H1 (cell line): ENCODE measurements at regions of chr6 and their contacts with region 1.

Region 1: GRCh38 chr6:39865011-39865888 is 69.0 kb downstream of the MOCS1 start:
- DNase-seq: peak; percentile 13 to 95
- H3K4me3 ChIP-seq: no peak overlapping the region
- H3K27ac ChIP-seq: no peak overlapping the region
- H3K4me1 ChIP-seq: peaks cover 0 to 6% (median 3%) of the 10 kb centered on the region in 4 experiments; a peak in 3 of 7 replicates
- H3K27me3 ChIP-seq: no peaks in the 10 kb centered on the region
- CTCF ChIP-seq: peak; percentile 82 to 90 (median 88)
- EP300 ChIP-seq: no peak
- POLR2A ChIP-seq: no peak
- RAD21 ChIP-seq: peak; percentile 66 to 76

Region 2: GRCh38 chr6:39361657-39362486 is 503.4 kb before region 1 on chr6:
- CTCF ChIA-PET with region 1: interaction called, 17 read pairs
- POLR2A ChIA-PET with region 1: no interaction called
- DNase-seq: peak; percentile 49 to 88
- H3K4me3 ChIP-seq: no peak overlapping the region
- H3K27ac ChIP-seq: no peak overlapping the region
- H3K4me1 ChIP-seq: peaks cover 0 to 7% (median 2%) of the 10 kb centered on the region in 4 experiments; a peak in 4 of 7 replicates
- H3K27me3 ChIP-seq: no peaks in the 10 kb centered on the region
- CTCF ChIP-seq: peak; percentile 84 to 96 (median 89)
- EP300 ChIP-seq: no peak
- POLR2A ChIP-seq: no peak
- RAD21 ChIP-seq: peak; percentile 91 to 92

Region 3: DNA sequence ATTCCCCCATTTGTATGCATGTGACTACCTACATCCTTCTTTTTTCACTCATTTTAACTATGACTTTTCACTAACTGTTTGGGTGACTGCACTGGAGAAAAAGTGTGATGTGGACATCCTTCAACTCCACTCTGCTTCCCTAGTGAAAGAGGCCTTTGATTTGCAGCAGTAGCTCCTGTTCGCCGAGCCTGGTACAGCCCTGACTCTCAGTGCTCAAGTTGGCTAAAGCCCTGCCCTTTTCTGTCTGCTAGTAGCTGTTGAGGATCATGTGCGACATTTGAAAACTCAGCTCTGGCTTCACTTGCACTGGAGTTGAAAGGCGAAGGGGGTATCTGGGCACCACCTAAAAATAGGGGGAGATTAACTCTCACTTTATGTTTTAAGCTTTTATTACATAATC is 31.0 kb before region 1 on chr6:
- CTCF ChIA-PET with region 1: interaction called, 16 read pairs
- POLR2A ChIA-PET with region 1: no interaction called
- DNase-seq: no peak
- H3K4me3 ChIP-seq: no peak overlapping the region
- H3K27ac ChIP-seq: no peak overlapping the region
- H3K4me1 ChIP-seq: peaks cover 0 to 5% (median 0%) of the 10 kb centered on the region in 4 experiments; a peak in 1 of 7 replicates
- H3K27me3 ChIP-seq: no peaks in the 10 kb centered on the region
- CTCF ChIP-seq: no peak
- EP300 ChIP-seq: no peak
- POLR2A ChIP-seq: no peak
- RAD21 ChIP-seq: no peak

Region 4: DNA sequence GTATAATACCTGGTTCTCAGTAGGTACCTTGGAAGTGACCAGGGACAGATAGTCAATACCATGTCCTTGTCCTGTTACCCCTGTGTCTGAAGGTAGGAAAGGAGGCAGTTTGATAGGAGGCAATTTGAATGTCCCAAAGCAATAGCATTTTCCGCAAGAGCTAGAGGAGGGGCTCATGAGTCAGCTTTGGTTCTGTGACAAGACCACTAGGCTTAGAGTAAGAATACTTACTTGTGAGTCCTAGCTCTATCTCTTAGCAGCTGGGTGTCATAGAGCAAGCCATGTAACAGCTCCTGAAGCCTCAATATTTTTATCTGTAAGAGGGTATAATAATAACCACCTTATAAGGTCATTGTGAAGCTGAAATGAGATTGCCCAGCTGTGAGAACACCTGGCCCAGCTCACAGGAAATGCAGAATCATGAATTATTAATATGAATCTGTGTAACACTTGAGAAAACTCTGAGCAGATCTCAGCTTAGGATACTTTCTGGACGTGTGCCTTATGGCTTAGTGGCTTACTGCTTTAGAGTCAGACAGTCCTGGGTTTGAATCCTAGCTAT is 14.4 kb before region 1 on chr6:
- CTCF ChIA-PET with region 1: interaction called, 80 read pairs
- POLR2A ChIA-PET with region 1: no interaction called
- DNase-seq: no peak
- H3K4me3 ChIP-seq: no peak overlapping the region
- H3K27ac ChIP-seq: no peak overlapping the region
- H3K4me1 ChIP-seq: no peaks in the 10 kb centered on the region; a peak in 1 of 7 replicates
- H3K27me3 ChIP-seq: no peaks in the 10 kb centered on the region
- CTCF ChIP-seq: no peak
- EP300 ChIP-seq: no peak
- POLR2A ChIP-seq: no peak
- RAD21 ChIP-seq: no peak

Region 5: GRCh38 chr6:39892490-39893129 is 27.4 kb after region 1 on chr6:
- CTCF ChIA-PET with region 1: interaction called, 135 read pairs
- POLR2A ChIA-PET with region 1: no interaction called
- DNase-seq: peak; percentile 17 to 83
- H3K4me3 ChIP-seq: no peak overlapping the region
- H3K27ac ChIP-seq: no peak overlapping the region
- H3K4me1 ChIP-seq: peaks cover 0 to 6% (median 2%) of the 10 kb centered on the region in 4 experiments; a peak in 2 of 7 replicates
- H3K27me3 ChIP-seq: no peaks in the 10 kb centered on the region
- CTCF ChIP-seq: peak; percentile 82 to 95 (median 91)
- EP300 ChIP-seq: no peak
- POLR2A ChIP-seq: no peak
- RAD21 ChIP-seq: peak; percentile 91 to 92

Region 6: GRCh38 chr6:39915866-39916265 is 50.6 kb after region 1 on chr6:
- CTCF ChIA-PET with region 1: interaction called, 16 read pairs
- POLR2A ChIA-PET with region 1: no interaction called
- DNase-seq: no peak
- H3K4me3 ChIP-seq: no peak overlapping the region
- H3K27ac ChIP-seq: no peak overlapping the region
- H3K4me1 ChIP-seq: no peaks in the 10 kb centered on the region
- H3K27me3 ChIP-seq: no peaks in the 10 kb centered on the region
- CTCF ChIP-seq: no peak
- EP300 ChIP-seq: no peak
- POLR2A ChIP-seq: no peak
- RAD21 ChIP-seq: no peak